HEK293T (cell line): ENCODE measurements at regions of chr4 and their contacts with region 1.

Region 1: GRCh38 chr4:142696334-142697122 is 149.6 kb downstream of the INPP4B start:
- DNase-seq: no peak

Region 2: GRCh38 chr4:142707401-142707800 is 10.9 kb after region 1 on chr4:
- CTCF ChIA-PET with region 1: no interaction called
- POLR2A ChIA-PET with region 1: no interaction called
- DNase-seq: no peak

Region 3: GRCh38 chr4:142781114-142781513 is 84.6 kb after region 1 on chr4:
- CTCF ChIA-PET with region 1: interaction called, 13 read pairs
- POLR2A ChIA-PET with region 1: no interaction called
- DNase-seq: no peak